ENCODE measurements at regions of chr1 and their contacts with region 1.

Region 1: GRCh38 chr1:89762779-89763648 is 57.8 kb upstream of the LRRC8D start:
- DNase-seq: peak; percentile 88
- H3K4me3 Mint-ChIP-seq: peak overlapping the region; percentile 73
- H3K27ac Mint-ChIP-seq: peak overlapping the region; percentile 79
- H3K4me1 Mint-ChIP-seq: peaks cover 55% of the 10 kb centered on the region
- H3K27me3 Mint-ChIP-seq: no peaks in the 10 kb centered on the region

Region 2: DNA sequence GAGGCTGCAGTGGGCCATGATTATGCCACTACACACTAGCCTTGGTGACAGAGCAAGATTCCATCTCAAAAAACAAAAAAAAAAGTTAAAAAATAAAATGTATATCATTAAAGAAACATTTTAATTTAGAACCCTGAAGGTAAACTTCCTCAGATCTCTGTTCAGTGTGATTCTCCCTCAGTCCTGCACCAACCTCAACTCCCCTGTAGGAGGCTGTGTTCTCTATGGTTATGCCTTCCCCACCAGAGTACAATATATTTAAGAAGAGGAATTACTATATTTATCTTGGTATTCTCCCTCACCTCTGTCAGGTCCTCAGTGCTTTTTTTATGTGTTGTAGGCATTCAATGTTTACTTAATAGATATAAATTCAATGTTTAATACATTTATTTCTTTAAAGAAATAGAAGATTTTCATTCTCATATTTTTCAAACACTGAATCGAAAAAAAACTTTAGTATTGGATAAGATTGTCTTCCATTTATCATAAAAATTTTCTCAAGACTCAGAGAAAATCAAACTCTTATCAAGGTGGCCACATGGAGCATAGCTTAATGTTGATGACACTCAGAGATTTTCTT is 243.1 kb before region 1 on chr1:
- CTCF ChIA-PET with region 1: interaction called, 16 read pairs
- POLR2A ChIA-PET with region 1: no interaction called
- DNase-seq: peak; percentile 63
- H3K4me3 Mint-ChIP-seq: no peak overlapping the region
- H3K27ac Mint-ChIP-seq: no peak overlapping the region
- H3K4me1 Mint-ChIP-seq: peaks cover 21% of the 10 kb centered on the region
- H3K27me3 Mint-ChIP-seq: no peaks in the 10 kb centered on the region

Region 3: GRCh38 chr1:89615676-89616598 is 147.1 kb before region 1 on chr1:
- CTCF ChIA-PET with region 1: interaction called, 14 read pairs
- POLR2A ChIA-PET with region 1: interaction called, 7 read pairs
- DNase-seq: no peak
- H3K4me3 Mint-ChIP-seq: no peak overlapping the region
- H3K27ac Mint-ChIP-seq: peak overlapping the region; percentile 38
- H3K4me1 Mint-ChIP-seq: peaks cover 74% of the 10 kb centered on the region
- H3K27me3 Mint-ChIP-seq: no peaks in the 10 kb centered on the region

Region 4: DNA sequence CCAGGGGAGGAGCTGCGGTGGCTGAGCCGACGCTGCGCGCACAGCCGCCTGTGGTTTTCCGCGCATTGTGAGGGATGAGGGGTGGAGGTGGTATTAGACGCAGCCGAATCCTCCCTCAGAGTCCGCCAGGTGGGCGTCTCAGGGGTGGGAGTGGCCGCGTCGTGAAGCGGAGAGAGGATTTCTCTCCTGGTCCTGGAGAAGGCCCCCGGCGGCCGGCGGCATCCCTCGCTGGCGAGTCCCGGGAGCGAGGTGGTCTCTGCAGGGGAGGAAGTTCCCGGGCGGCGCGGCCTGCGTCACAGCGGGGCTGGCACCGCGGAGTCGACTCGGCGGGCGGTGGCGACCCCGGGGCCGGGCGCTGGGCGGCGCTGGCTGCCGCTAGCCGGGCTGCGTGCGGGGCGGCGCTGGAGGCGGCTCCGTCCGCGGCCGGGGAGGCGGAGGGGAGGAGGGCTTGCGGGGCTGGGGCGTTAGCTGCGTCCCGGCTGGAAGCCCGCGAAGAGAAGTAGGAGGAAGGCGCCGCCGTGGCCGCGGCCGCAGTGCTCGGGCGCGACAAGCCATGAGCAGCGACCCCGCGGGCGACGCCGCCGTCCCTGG is 130.3 kb before region 1 on chr1 and contains the start of gene LRRC8C:
- CTCF ChIA-PET with region 1: interaction called, 41 read pairs
- POLR2A ChIA-PET with region 1: interaction called, 7 read pairs
- DNase-seq: peak; percentile 84
- H3K4me3 Mint-ChIP-seq: peak within 1 kb of the TSS; percentile 98
- H3K27ac Mint-ChIP-seq: peak within 1 kb of the TSS; percentile 97
- H3K4me1 Mint-ChIP-seq: peaks cover 72% of the 10 kb centered on the region
- H3K27me3 Mint-ChIP-seq: no peaks in the 10 kb centered on the region
- total RNA-seq, gene LRRC8C: 45.0 to 55.2 TPM

Region 5: DNA sequence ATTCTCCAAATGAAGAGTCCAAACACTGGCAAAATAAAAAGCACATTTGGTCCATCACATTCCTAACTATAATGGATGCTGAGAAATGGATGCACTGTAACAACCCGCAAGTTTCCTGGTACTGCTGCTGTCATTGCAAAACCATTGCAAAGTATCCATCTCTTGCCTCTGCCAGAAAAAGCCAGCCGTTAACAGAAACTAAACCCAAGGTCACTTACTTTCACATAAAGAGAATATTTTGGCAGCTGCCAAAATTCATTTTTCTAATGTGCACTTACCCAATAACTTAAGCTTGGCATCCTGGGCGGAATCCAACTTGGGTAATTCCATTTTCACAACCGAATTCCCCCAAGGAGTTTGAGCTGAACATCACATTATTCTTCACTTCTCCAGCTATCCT is 19.2 kb before region 1 on chr1:
- CTCF ChIA-PET with region 1: interaction called, 19 read pairs
- POLR2A ChIA-PET with region 1: interaction called, 3 read pairs
- DNase-seq: no peak
- H3K4me3 Mint-ChIP-seq: no peak overlapping the region
- H3K27ac Mint-ChIP-seq: no peak overlapping the region
- H3K4me1 Mint-ChIP-seq: peaks cover 29% of the 10 kb centered on the region
- H3K27me3 Mint-ChIP-seq: no peaks in the 10 kb centered on the region

Region 6: DNA sequence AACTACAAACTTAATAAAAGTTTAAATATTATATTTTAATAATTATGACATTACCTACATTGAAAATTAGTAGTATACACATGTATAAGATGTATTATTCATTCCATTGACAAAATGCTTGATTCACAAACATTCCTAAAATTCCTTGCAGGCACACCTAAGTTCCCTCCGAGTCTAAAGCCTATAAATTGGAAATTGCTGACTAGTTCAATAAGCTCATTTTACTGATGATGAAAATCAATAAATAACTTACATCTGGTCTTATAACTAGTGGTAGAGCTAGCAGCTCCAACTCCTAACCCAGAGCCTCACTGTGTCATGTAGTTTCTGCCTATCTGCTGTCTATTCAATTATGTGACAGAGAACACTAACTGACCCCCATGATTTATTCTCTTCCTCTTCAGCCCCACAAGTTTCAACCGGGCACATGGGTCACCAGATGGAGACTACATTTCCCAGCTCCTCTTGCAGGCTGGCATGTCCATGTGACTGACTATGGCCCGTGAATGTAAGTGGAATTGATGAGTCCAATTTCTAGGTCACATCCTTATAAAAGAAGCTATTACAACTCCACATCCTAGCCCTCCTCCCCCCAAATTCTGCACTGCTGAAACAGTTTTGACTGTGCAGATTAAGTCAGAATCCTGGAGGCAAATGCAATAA is 28.2 kb after region 1 on chr1:
- CTCF ChIA-PET with region 1: no interaction called
- POLR2A ChIA-PET with region 1: no interaction called
- DNase-seq: no peak
- H3K4me3 Mint-ChIP-seq: no peak overlapping the region
- H3K27ac Mint-ChIP-seq: no peak overlapping the region
- H3K4me1 Mint-ChIP-seq: no peaks in the 10 kb centered on the region
- H3K27me3 Mint-ChIP-seq: no peaks in the 10 kb centered on the region

Region 7: DNA sequence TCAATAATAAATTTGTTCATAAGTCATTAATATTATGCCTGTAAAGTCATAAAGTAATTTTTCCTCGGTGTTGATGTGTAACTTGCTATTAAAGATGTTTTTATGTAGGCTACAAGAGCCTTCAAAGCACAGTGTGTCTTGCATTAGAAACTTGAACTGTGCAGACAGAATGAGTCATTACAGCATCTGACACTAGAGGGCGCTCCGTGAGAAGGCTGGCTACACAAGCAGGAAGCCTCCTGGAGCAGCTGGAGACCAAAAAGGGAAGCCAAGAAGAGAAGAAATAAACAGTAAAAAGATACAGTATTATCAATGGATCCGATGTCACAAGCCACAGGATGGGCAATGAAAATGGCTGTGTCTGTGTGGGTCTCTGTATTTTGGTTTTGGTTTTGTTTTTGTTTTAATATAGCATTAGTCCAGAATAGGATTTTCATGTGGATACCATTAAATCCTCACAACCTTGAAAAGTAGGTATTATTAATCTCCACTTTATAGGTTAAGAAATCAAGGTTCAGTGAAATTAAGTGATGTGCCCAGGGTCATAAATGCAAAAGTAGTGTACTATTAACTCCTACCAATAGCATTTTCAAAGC is 41.7 kb after region 1 on chr1:
- CTCF ChIA-PET with region 1: no interaction called
- POLR2A ChIA-PET with region 1: no interaction called
- DNase-seq: peak; percentile 91
- H3K4me3 Mint-ChIP-seq: no peak overlapping the region
- H3K27ac Mint-ChIP-seq: no peak overlapping the region
- H3K4me1 Mint-ChIP-seq: peaks cover 6% of the 10 kb centered on the region
- H3K27me3 Mint-ChIP-seq: peaks cover 3% of the 10 kb centered on the region

Region 8: GRCh38 chr1:90074137-90074536 is 311.1 kb after region 1 on chr1:
- CTCF ChIA-PET with region 1: no interaction called
- POLR2A ChIA-PET with region 1: no interaction called
- DNase-seq: no peak
- H3K4me3 Mint-ChIP-seq: no peak overlapping the region
- H3K27ac Mint-ChIP-seq: no peak overlapping the region
- H3K4me1 Mint-ChIP-seq: no peaks in the 10 kb centered on the region
- H3K27me3 Mint-ChIP-seq: peaks cover 21% of the 10 kb centered on the region

Region 9: GRCh38 chr1:90236493-90236892 is 473.5 kb after region 1 on chr1:
- CTCF ChIA-PET with region 1: no interaction called
- POLR2A ChIA-PET with region 1: no interaction called
- DNase-seq: no peak
- H3K4me3 Mint-ChIP-seq: no peak overlapping the region
- H3K27ac Mint-ChIP-seq: no peak overlapping the region
- H3K4me1 Mint-ChIP-seq: no peaks in the 10 kb centered on the region
- H3K27me3 Mint-ChIP-seq: no peaks in the 10 kb centered on the region

Measured in activated CD4-positive, alpha-beta T cell treated with anti-CD3 and anti-CD28 coated beads, Interleukin-2, amount 10 ng/mL, durations not matched to agents 7 days and 5 days (primary cell).